Left ventricle myocardium superior (tissue), 1 donor: ENCODE measurements at regions of chr2 and their contacts with region 1.

Region 1: GRCh38 chr2:217886720-217887309 is 116.0 kb downstream of the TNS1 start:
- DNase-seq: peak; percentile 70
- ATAC-seq: peak; percentile 46

Region 2: GRCh38 chr2:217988014-217988839 is 101.4 kb after region 1 on chr2:
- intact Hi-C with region 1: loop called (anchors 10 kb)
- DNase-seq: peak; percentile 89
- ATAC-seq: peak; percentile 89